ENCODE measurements at regions of chr3 and their contacts with region 1.

Region 1: DNA sequence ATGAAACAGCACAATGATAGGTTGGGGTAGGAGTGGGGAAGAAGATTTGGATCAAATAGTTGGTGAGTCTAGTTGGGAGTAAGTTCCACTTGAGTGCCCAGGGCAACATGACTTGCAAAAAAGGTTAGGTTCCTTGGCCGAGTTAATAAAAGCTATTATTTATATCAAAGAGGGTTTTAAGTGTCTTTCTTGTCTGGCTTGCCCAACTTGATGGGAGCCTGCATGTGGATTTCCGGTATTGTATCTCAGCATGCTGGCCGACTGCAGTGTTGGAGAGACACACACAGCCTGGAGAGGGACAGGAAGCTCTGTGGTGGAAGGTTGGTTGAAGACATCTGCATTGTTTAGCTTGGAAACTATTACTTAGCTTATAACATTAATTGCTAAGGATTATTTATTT is 449.5 kb upstream of the TBL1XR1 start:
- DNase-seq: peak; percentile 28 to 57
- ATAC-seq: peak; percentile 52 to 71 (median 65)
- H3K4me3 ChIP-seq: no peak overlapping the region
- H3K4me3 Mint-ChIP-seq: peak overlapping the region; percentile 91
- H3K27ac ChIP-seq: peak overlapping the region; percentile 24
- H3K27ac Mint-ChIP-seq: peak overlapping the region; percentile 88
- H3K4me1 ChIP-seq: peaks cover 36% of the 10 kb centered on the region
- H3K4me1 Mint-ChIP-seq: peaks cover 62 to 70% of the 10 kb centered on the region in 2 donors
- H3K27me3 ChIP-seq: no peaks in the 10 kb centered on the region
- H3K27me3 Mint-ChIP-seq: no peaks in the 10 kb centered on the region
- CTCF ChIP-seq: no peak

Region 2: GRCh38 chr3:177201706-177202397 is 444.9 kb before region 1 on chr3:
- intact Hi-C with region 1: no loop called
- DNase-seq: peak; percentile 40 to 87
- ATAC-seq: peak; percentile 55 to 70 (median 56)
- H3K4me3 ChIP-seq: no peak overlapping the region
- H3K4me3 Mint-ChIP-seq: peak overlapping the region; percentile 63
- H3K27ac ChIP-seq: peak overlapping the region; percentile 60
- H3K27ac Mint-ChIP-seq: peak overlapping the region; percentile 72 to 80
- H3K4me1 ChIP-seq: peaks cover 12% of the 10 kb centered on the region
- H3K4me1 Mint-ChIP-seq: peaks cover 27 to 32% of the 10 kb centered on the region in 2 donors
- H3K27me3 ChIP-seq: no peaks in the 10 kb centered on the region
- H3K27me3 Mint-ChIP-seq: no peaks in the 10 kb centered on the region
- CTCF ChIP-seq: no peak

Region 3: DNA sequence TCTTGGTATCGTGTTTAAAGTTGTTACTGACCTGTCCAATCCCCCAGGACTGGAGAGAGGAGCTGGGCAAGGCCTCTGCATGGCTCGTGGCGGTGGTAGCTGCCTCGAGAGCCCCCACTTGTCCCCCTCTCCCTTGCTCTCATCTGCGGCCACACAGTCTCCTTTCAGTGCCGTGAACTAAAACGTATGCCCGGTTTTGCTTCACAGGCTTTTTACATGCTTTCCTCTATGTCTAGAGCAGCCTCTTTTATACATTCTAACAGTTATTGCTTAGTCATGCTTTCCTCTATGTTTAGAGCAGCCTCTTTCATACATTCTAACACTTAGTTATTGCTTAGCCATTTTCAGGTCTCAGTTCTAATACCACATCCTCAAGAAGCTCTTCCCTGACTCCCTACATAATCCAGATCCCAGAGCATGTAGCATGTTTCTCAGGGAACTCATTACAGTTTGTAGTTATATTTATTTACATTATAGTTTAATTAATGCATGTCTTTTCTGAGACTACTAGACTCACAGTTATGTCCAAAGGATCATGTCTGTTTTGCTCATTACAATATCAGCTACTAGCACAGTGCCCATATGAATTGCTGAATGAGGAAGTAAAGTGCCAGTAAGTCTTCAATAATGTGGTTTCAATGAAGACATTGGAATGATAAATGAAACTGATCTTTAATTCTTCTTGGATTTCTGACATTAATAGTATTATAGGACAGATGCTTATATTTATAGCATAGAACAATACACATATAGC is 383.0 kb before region 1 on chr3:
- intact Hi-C with region 1: no loop called
- DNase-seq: no peak
- ATAC-seq: no peak
- H3K4me3 ChIP-seq: no peak overlapping the region
- H3K4me3 Mint-ChIP-seq: no peak overlapping the region
- H3K27ac ChIP-seq: no peak overlapping the region
- H3K27ac Mint-ChIP-seq: no peak overlapping the region
- H3K4me1 ChIP-seq: no peaks in the 10 kb centered on the region
- H3K4me1 Mint-ChIP-seq: peaks cover 0 to 5% of the 10 kb centered on the region in 2 donors
- H3K27me3 ChIP-seq: no peaks in the 10 kb centered on the region
- H3K27me3 Mint-ChIP-seq: no peaks in the 10 kb centered on the region
- CTCF ChIP-seq: no peak

Region 4: DNA sequence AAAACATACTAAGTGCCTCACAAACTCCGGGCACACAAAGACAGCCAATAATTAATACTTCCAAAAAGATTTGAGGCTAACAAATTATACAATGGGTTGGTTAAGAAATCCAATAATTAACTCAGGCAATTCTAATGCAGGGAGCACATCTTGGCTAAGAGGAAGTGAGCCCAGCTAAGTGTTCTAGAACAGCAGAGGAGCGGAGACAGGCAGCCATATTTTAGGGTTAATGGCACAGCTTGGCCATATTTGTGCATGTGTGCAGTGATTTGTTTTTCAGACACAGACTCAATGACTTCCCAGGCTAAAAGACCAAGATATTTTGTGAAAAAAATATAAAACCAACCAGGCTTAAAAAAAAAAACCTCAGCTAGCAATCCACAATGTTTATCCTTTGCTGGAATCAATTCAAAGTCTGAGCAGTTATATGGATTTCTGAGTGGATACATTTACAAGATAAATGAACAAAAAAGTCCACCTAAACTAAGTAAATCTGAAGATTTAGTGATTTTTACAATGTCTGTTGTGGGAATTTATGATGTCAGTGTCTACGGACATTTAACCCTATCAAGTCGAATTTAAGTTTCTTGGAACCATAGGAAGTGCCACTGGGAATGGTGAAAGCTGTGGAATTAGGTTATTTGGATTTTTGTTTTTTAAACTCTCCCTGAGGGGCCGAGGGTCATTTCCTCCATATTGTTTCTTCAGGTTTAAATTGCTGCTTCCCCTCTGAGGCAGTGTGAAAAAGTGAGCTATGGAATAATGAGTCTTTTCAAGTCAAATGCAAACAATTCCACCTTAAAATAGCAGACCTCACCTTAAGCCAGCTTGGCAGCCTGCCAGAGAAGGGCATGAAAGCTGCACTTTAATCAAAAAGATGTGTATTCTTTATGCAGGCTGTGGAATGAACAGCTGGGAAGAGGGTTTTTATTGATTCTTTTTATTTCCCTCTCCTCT is 35.8 kb before region 1 on chr3:
- intact Hi-C with region 1: no loop called
- DNase-seq: peak in 1 of 2 donors; percentile 64
- ATAC-seq: no peak
- H3K4me3 ChIP-seq: no peak overlapping the region
- H3K4me3 Mint-ChIP-seq: no peak overlapping the region
- H3K27ac ChIP-seq: no peak overlapping the region
- H3K27ac Mint-ChIP-seq: no peak overlapping the region
- H3K4me1 ChIP-seq: no peaks in the 10 kb centered on the region
- H3K4me1 Mint-ChIP-seq: peaks cover 0 to 10% of the 10 kb centered on the region in 2 donors
- H3K27me3 ChIP-seq: no peaks in the 10 kb centered on the region
- H3K27me3 Mint-ChIP-seq: no peaks in the 10 kb centered on the region
- CTCF ChIP-seq: no peak

Region 5: GRCh38 chr3:177679568-177680441 is 33.1 kb after region 1 on chr3:
- intact Hi-C with region 1: loop called (anchors 5 kb)
- DNase-seq: peak in 1 of 2 donors; percentile 35
- ATAC-seq: peak; percentile 57 to 80 (median 65)
- H3K4me3 ChIP-seq: no peak overlapping the region
- H3K4me3 Mint-ChIP-seq: peak overlapping the region; percentile 25
- H3K27ac ChIP-seq: peak overlapping the region; percentile 57
- H3K27ac Mint-ChIP-seq: peak overlapping the region; percentile 82 to 84
- H3K4me1 ChIP-seq: peaks cover 23% of the 10 kb centered on the region
- H3K4me1 Mint-ChIP-seq: peaks cover 55 to 59% of the 10 kb centered on the region in 2 donors
- H3K27me3 ChIP-seq: no peaks in the 10 kb centered on the region
- H3K27me3 Mint-ChIP-seq: no peaks in the 10 kb centered on the region
- CTCF ChIP-seq: no peak